Activated CD8-positive, alpha-beta T cell treated with anti-CD3 and anti-CD28 coated beads for 36 hours (primary cell): ENCODE measurements at regions of chr18 and their contacts with region 1.

Region 1: GRCh38 chr18:44579028-44579702 is 101.5 kb upstream of the SETBP1 start:
- DNase-seq: no peak
- ATAC-seq: peak; percentile 58
- H3K4me3 Mint-ChIP-seq: no peak overlapping the region
- H3K27ac Mint-ChIP-seq: no peak overlapping the region
- H3K4me1 Mint-ChIP-seq: peaks cover 3% of the 10 kb centered on the region
- H3K27me3 Mint-ChIP-seq: peaks cover under 1% of the 10 kb centered on the region
- CTCF ChIP-seq: peak; percentile 42

Region 2: GRCh38 chr18:44396550-44396949 is 182.6 kb before region 1 on chr18:
- CTCF ChIA-PET with region 1: no interaction called
- POLR2A ChIA-PET with region 1: no interaction called
- intact Hi-C with region 1: no loop called
- DNase-seq: no peak
- ATAC-seq: no peak
- H3K4me3 Mint-ChIP-seq: no peak overlapping the region
- H3K27ac Mint-ChIP-seq: no peak overlapping the region
- H3K4me1 Mint-ChIP-seq: no peaks in the 10 kb centered on the region
- H3K27me3 Mint-ChIP-seq: no peaks in the 10 kb centered on the region
- CTCF ChIP-seq: no peak

Region 3: GRCh38 chr18:44568986-44569385 is 10.2 kb before region 1 on chr18:
- CTCF ChIA-PET with region 1: interaction called, 13 read pairs
- POLR2A ChIA-PET with region 1: no interaction called
- intact Hi-C with region 1: no loop called
- DNase-seq: no peak
- ATAC-seq: no peak
- H3K4me3 Mint-ChIP-seq: no peak overlapping the region
- H3K27ac Mint-ChIP-seq: no peak overlapping the region
- H3K4me1 Mint-ChIP-seq: no peaks in the 10 kb centered on the region
- H3K27me3 Mint-ChIP-seq: no peaks in the 10 kb centered on the region
- CTCF ChIP-seq: no peak

Region 4: DNA sequence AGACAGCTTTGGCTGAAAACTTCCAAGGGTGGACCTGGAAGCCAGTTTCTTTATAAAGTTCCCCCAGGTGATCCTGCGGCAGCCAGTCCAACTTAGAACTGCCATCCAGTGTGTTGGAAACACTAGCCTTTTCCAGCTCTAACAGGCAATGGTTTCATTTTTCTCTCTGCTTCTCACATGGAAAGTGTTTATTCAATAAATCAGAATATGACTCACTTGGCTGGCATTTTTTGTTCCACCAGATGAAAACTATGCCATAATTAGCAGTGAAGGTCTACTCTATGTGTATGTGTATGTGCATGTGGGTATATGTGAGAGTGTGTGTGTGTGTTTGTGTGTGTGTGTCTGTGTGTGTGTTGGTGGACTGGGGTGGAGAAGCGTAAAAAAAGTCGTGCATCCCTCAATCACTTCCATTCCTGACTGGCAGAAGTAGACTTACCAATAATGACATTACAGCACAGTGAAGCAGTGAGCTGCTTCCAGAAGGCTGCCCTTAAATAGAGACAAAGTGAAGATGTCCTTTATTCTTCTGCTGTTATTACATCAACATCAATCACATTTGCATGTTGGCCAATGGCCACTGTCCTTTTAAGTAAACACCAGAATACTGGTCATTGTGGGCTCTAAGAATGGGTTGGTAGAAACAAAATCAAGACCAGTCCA is 10.7 kb after region 1 on chr18:
- CTCF ChIA-PET with region 1: interaction called, 22 read pairs
- POLR2A ChIA-PET with region 1: no interaction called
- intact Hi-C with region 1: no loop called
- DNase-seq: no peak
- ATAC-seq: no peak
- H3K4me3 Mint-ChIP-seq: no peak overlapping the region
- H3K27ac Mint-ChIP-seq: no peak overlapping the region
- H3K4me1 Mint-ChIP-seq: no peaks in the 10 kb centered on the region
- H3K27me3 Mint-ChIP-seq: peaks cover 4% of the 10 kb centered on the region
- CTCF ChIP-seq: no peak

Region 5: DNA sequence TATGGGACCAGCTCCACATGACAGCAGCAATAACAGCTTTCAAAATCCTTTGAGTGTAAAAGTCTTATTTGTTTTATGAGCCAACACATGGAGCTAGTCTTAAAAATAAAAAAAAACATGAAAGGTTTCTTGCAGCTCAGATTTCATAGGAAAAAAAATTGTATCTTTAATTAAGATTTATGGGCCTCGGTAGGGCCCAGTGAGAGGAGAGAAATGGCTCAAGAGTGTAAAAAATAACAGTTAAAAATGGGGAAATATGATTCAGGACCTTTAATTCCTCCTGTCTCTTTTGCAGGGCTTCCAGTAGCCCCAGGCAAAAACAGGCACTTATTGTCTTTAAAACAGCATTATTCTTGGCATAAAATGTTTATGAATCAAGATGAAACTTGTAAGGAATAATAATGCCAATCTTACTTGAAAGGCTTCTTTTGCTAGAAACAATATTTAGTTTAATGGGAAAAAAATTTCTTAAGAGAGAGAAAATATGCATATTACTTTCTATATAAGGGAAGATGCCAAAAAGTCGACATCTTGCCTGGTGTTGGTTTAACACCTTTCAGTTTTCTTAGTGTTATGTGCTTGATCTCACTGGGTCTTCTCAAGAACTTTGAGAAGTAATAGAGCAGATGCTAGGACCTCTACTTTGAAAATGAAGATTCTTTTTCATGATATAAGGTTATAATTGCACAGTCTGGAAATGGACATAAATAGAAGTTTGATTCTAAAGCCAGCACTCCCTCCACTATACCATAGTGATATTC is 30.2 kb after region 1 on chr18:
- CTCF ChIA-PET with region 1: no interaction called
- POLR2A ChIA-PET with region 1: no interaction called
- intact Hi-C with region 1: no loop called
- DNase-seq: no peak
- ATAC-seq: no peak
- H3K4me3 Mint-ChIP-seq: no peak overlapping the region
- H3K27ac Mint-ChIP-seq: no peak overlapping the region
- H3K4me1 Mint-ChIP-seq: no peaks in the 10 kb centered on the region
- H3K27me3 Mint-ChIP-seq: no peaks in the 10 kb centered on the region
- CTCF ChIP-seq: no peak